ENCODE measurements at regions of chr16 and their contacts with region 1.

Region 1: DNA sequence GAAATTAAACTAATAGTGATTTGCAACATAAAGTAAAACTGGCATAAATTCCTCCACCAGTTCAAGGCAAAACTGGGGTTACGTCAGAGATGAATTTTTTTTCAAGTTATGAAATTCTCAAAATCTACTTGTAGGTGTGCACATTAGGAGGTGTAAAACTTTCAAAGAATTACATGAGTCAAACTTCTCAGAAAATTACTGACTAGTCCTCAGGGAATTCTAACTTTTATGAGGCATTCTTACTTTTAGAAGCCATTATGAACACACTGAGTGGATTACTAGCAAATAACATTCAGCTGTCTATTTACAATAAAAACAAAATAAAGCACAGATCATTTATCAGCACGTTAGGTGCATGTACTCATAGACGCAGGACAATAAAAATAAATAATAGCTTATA is 348.7 kb downstream of the CDH11 start:
- DNase-seq: no peak
- H3K4me3 ChIP-seq: no peak overlapping the region
- H3K27ac ChIP-seq: no peak overlapping the region
- H3K4me1 ChIP-seq: peaks cover 3% of the 10 kb centered on the region
- H3K27me3 ChIP-seq: no peaks in the 10 kb centered on the region
- CTCF ChIP-seq: no peak
- EP300 ChIP-seq: no peak
- POLR2A ChIP-seq: no peak

Region 2: DNA sequence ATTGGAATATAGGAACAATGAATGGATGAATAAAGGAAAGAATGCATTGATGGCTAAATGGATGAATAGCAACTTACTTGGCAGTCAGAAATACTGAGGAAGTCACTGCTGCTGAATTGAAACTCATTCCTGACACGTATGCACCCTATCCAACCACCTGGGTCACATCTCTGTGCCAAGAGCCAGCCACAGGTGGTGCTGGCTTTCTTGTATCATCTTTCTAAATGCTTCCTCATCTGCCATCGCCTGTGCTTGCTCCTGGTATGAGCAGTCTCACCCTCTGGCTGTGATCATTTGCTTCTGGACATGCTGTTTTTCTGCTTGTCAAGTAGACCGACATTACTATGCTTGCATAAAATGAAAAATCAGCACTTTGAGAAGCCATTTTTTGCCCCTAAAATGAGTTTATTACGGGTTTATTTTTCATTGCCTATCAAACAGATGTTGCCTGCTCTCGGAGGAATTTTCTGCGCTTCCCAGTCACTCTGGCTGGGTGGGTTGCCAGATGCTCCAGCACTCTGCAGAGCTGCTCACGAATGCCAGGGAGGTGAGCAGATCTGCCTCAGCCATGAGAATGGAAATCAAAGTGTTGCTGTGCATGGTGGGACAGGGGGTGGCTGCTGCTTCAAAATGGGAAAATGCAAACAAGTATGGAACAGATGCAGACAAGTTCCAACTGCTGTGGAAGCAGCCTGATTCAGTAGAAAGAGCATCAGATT is 1387.3 kb before region 1 on chr16:
- intact Hi-C with region 1: no loop called
- DNase-seq: no peak
- H3K4me3 ChIP-seq: no peak overlapping the region
- H3K27ac ChIP-seq: no peak overlapping the region
- H3K4me1 ChIP-seq: no peaks in the 10 kb centered on the region
- H3K27me3 ChIP-seq: no peaks in the 10 kb centered on the region
- CTCF ChIP-seq: no peak
- EP300 ChIP-seq: no peak
- POLR2A ChIP-seq: no peak

Region 3: DNA sequence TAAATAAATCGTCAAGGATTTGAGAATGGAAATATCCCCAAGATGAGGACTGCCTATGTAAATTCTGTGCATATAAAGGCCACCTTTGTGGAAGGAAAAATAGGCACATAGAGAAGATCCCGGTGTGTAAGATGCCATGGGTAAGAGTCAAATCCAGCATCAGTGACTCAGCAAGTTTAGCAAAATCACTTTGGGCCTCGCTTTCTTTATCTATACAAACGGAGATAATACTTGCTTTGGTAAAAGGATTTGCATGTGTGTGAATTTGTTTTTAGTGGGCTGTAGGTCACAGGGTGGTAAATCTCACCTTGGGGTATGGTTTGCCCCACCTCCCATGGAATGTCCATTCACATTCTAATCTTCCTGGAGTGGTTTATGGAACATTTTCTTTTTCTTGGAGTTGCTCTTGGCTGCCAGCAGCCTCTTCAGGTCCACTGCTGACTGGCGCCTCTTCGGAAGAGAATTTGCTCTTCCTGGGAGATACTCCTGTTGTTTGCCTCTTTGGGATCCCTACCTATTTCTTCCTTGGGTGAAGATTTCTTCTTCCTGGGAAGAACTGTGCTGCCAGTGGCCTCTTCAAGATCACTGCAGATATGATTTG is 238.9 kb before region 1 on chr16:
- intact Hi-C with region 1: no loop called
- DNase-seq: no peak
- H3K4me3 ChIP-seq: no peak overlapping the region
- H3K27ac ChIP-seq: no peak overlapping the region
- H3K4me1 ChIP-seq: no peaks in the 10 kb centered on the region
- H3K27me3 ChIP-seq: no peaks in the 10 kb centered on the region
- CTCF ChIP-seq: no peak
- EP300 ChIP-seq: no peak
- POLR2A ChIP-seq: no peak

Region 4: DNA sequence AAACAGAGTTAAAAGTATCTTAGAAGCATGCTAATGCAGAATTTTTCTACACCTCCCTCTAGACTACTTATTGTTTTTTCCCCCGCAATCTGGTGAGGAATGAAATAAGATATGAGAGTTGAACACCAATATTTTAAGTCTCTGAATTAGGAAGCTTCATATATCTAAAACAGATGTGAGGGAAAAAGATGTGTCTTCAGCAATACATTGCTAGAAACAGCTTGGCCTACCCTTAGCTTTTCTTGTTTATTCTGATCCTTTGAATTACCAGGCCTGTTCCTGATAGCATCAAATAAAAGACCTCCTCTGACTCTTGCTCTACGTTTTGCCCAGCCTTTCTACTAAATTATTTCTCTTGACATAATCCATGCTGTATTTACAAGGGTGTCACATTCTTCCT is 126.8 kb after region 1 on chr16:
- intact Hi-C with region 1: no loop called
- DNase-seq: no peak
- H3K4me3 ChIP-seq: no peak overlapping the region
- H3K27ac ChIP-seq: no peak overlapping the region
- H3K4me1 ChIP-seq: no peaks in the 10 kb centered on the region
- H3K27me3 ChIP-seq: no peaks in the 10 kb centered on the region
- CTCF ChIP-seq: no peak
- EP300 ChIP-seq: no peak
- POLR2A ChIP-seq: no peak

Region 5: GRCh38 chr16:66562407-66562806 is 1789.2 kb after region 1 on chr16:
- intact Hi-C with region 1: loop called in 1 of 4 experiments (anchors 5 kb)
- DNase-seq: no peak
- H3K4me3 ChIP-seq: no peak overlapping the region
- H3K27ac ChIP-seq: no peak overlapping the region
- H3K4me1 ChIP-seq: no peaks in the 10 kb centered on the region
- H3K27me3 ChIP-seq: no peaks in the 10 kb centered on the region
- CTCF ChIP-seq: no peak
- EP300 ChIP-seq: no peak
- POLR2A ChIP-seq: no peak